ENCODE measurements at regions of chr7 and their contacts with region 1.

Region 1: DNA sequence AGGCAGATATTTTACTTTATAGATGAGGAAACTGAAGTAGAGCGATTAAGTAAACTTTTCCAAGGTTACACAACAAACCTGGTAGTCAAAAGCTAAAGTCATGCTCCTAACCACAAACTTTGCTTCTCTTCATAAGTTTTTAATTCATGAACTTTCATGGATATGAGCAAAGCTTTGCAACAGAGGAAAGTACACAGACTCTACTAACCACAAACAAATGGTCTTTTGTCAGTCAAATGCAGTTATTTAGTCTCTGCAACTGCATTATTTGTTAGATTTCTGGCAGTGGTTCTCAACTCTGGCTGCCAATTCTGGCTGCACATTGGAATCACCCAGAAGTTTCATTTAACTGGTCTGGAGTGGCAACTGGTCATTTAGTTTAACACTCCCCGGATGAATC is 140.6 kb upstream of the TMEM168 start:
- DNase-seq: no peak
- H3K4me3 ChIP-seq: no peak overlapping the region
- H3K27ac ChIP-seq: no peak overlapping the region
- H3K4me1 ChIP-seq: no peaks in the 10 kb centered on the region
- H3K27me3 ChIP-seq: no peaks in the 10 kb centered on the region
- CTCF ChIP-seq: no peak

Region 2: DNA sequence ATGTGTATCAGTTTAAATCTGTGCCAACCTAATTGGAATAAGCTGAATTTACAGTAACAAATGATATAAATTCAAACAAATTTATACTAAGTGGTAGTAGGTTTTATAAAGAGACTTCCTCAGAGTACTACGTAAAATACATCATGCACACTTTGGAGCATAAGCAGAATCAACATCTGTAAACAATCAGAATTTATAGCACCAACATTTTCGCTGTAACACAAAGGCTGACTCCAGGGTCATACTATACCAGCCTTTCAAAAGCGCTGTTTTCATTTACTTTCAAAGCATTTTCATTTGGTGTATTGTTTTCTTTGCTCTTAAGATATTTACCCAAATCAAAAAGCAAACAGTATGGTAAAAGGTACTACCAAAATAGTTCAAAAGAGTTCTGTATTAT is 111.3 kb before region 1 on chr7:
- CTCF ChIA-PET with region 1: no interaction called
- POLR2A ChIA-PET with region 1: interaction called, 10 read pairs
- intact Hi-C with region 1: no loop called
- DNase-seq: no peak
- H3K4me3 ChIP-seq: no peak overlapping the region
- H3K27ac ChIP-seq: no peak overlapping the region
- H3K4me1 ChIP-seq: no peaks in the 10 kb centered on the region
- H3K27me3 ChIP-seq: no peaks in the 10 kb centered on the region
- CTCF ChIP-seq: no peak

Region 3: GRCh38 chr7:112951070-112951469 is 20.3 kb after region 1 on chr7:
- CTCF ChIA-PET with region 1: no interaction called
- POLR2A ChIA-PET with region 1: interaction called, 14 read pairs
- intact Hi-C with region 1: no loop called
- DNase-seq: no peak
- H3K4me3 ChIP-seq: no peak overlapping the region
- H3K27ac ChIP-seq: no peak overlapping the region
- H3K4me1 ChIP-seq: no peaks in the 10 kb centered on the region
- H3K27me3 ChIP-seq: no peaks in the 10 kb centered on the region
- CTCF ChIP-seq: no peak